Dendritic cell treated with granulocyte-macrophage colony-stimulating factor and Interleukin-4, amounts not matched to agents 40 ng/mL and 50 ng/mL, for 4 days (primary cell): ENCODE measurements at regions of chr3 and their contacts with region 1.

Region 1: GRCh38 chr3:192423003-192423349 is 304.4 kb downstream of the FGF12 start:
- H3K4me3 Mint-ChIP-seq: no peak overlapping the region
- H3K27ac Mint-ChIP-seq: no peak overlapping the region
- H3K4me1 Mint-ChIP-seq: no peaks in the 10 kb centered on the region
- H3K27me3 Mint-ChIP-seq: no peaks in the 10 kb centered on the region

Region 2: GRCh38 chr3:192188218-192188835 is 234.6 kb before region 1 on chr3:
- intact Hi-C with region 1: loop called (anchors 5 kb)
- H3K4me3 Mint-ChIP-seq: no peak overlapping the region
- H3K27ac Mint-ChIP-seq: no peak overlapping the region
- H3K4me1 Mint-ChIP-seq: no peaks in the 10 kb centered on the region
- H3K27me3 Mint-ChIP-seq: no peaks in the 10 kb centered on the region